ENCODE measurements at regions of chr7 and their contacts with region 1.

Region 1: DNA sequence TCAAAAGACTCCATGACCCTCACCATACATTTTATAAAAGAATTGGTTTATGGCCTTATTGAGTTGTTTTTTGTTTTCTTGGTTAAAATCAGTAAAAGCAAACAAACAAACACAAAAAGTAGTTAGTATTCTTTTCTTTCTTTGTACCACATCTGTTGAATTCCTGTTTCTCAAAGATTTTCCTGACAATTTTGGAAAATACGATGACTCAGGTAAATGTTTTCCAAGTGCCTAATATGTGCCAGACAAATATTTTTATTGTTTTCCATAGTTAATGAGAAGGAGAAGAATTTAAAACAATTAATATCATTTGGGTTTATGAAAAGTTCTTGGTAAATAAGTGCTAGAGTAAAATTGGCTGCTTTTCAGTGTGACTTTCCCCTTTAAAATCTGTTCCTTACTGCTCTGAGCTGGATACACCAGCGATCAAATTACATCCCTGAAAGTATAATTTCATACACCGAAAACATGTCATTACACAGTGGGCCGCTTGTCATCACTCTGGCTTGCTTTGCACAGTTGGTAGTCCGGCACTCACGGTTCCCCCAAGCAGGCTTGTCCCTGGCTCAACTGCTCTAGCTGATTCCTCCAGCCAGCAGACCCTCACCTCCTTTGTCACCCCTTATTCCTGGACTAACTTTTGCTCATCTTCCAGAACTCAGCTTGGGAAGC is 80.5 kb downstream of the TBXAS1 start:
- DNase-seq: no peak
- ATAC-seq: no peak
- H3K4me3 ChIP-seq: no peak overlapping the region
- H3K4me3 Mint-ChIP-seq: no peak overlapping the region
- H3K27ac ChIP-seq: no peak overlapping the region
- H3K27ac Mint-ChIP-seq: no peak overlapping the region
- H3K4me1 ChIP-seq: peaks cover 0 to 15% of the 10 kb centered on the region in 2 donors
- H3K4me1 Mint-ChIP-seq: peaks cover 24% of the 10 kb centered on the region
- H3K27me3 ChIP-seq: no peaks in the 10 kb centered on the region
- H3K27me3 Mint-ChIP-seq: no peaks in the 10 kb centered on the region
- CTCF ChIP-seq: no peak

Region 2: DNA sequence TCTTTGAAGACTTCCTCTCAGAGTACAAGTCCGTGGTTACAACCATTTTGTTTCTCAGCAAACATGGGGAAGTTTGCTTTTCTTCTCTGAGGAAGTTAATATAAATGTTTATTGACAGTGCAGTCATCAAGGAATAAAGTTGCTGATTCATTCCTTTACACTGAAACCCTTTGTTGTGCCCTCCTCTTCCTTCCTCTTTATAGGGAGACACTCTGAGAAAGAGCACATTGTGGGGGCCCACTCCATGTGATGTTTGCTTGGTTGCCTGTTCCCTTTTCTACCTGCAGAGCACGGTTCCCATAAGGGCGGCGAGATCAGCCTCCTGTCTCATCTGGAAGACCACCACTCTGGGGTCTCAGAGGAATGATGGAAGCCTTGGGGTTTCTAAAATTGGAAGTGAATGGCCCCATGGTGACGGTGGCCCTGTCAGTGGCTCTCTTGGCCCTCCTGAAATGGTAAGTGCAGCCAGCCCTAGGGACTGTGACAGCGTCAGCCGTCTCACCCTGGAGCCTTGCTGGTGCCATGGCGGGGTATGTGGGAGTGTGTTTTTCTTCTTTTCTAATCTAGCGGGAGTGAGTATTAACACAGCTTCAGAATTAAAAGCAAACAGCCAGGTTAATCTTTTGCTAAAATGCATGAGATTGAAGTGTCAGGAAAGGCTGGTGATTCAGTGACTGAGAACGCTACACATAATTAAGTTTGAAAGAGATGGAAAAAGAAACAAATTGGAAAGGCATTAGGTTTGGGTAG is 80.3 kb before region 1 on chr7 and contains the start of gene TBXAS1:
- CTCF ChIA-PET with region 1: no interaction called
- POLR2A ChIA-PET with region 1: no interaction called
- intact Hi-C with region 1: loop called (anchors 5 kb)
- DNase-seq: peak; percentile 62
- ATAC-seq: peak; percentile 70
- H3K4me3 ChIP-seq: peak within 1 kb of the TSS; percentile 7 to 69 (median 45)
- H3K4me3 Mint-ChIP-seq: peak within 1 kb of the TSS; percentile 69
- H3K27ac ChIP-seq: peak within 1 kb of the TSS; percentile 56 to 69
- H3K27ac Mint-ChIP-seq: peak within 1 kb of the TSS; percentile 71
- H3K4me1 ChIP-seq: peaks cover 32 to 34% of the 10 kb centered on the region in 2 donors
- H3K4me1 Mint-ChIP-seq: peaks cover 34% of the 10 kb centered on the region
- H3K27me3 ChIP-seq: no peaks in the 10 kb centered on the region
- H3K27me3 Mint-ChIP-seq: peaks cover 10% of the 10 kb centered on the region
- CTCF ChIP-seq: no peak
- total RNA-seq, gene TBXAS1: 8.1 and 14.2 TPM in 2 replicates

Measured in B cell (primary cell).